ENCODE measurements at regions of chr11 and their contacts with region 1.

Region 1: GRCh38 chr11:34585735-34586487 is 35.0 kb upstream of the EHF start:
- DNase-seq: peak; percentile 64
- ATAC-seq: peak; percentile 72
- H3K4me3 ChIP-seq: peak overlapping the region in 1 of 2 experiments; percentile 25; a peak in 2 of 4 replicates
- H3K27ac ChIP-seq: peak overlapping the region; percentile 69
- H3K4me1 ChIP-seq: 0 out of 2 replicates have a peak, but pooled peaks cover 3% of the 10 kb centered on the region
- H3K27me3 ChIP-seq: no peaks in the 10 kb centered on the region; the same call in 1 of the 2 replicates
- CTCF ChIP-seq: peak; percentile 76

Region 2: DNA sequence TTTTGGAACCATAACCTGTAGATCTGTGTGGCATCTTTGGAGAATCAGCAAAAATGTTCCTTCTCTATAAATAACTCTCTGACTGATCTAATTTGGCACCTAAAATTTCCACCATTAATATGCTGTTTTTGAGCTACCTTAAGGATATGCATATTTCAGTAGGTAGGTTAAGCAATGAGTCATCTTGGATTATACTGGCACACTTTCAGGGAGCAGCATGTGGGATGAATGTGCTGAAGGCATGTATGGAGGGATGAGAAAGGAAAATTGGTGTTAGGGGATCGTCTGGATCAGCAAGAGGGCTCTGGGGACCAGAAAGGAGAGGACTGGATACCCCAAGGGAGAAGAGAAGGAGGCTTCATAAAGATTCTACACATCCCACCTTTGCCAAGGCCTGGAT is 27.7 kb before region 1 on chr11:
- CTCF ChIA-PET with region 1: no interaction called
- POLR2A ChIA-PET with region 1: no interaction called
- in situ Hi-C with region 1: no loop called
- intact Hi-C with region 1: no loop called
- DNase-seq: no peak
- ATAC-seq: no peak
- H3K4me3 ChIP-seq: no peak overlapping the region
- H3K27ac ChIP-seq: no peak overlapping the region
- H3K4me1 ChIP-seq: no peaks in the 10 kb centered on the region
- H3K27me3 ChIP-seq: peaks cover 28% of the 10 kb centered on the region
- CTCF ChIP-seq: no peak

Region 3: DNA sequence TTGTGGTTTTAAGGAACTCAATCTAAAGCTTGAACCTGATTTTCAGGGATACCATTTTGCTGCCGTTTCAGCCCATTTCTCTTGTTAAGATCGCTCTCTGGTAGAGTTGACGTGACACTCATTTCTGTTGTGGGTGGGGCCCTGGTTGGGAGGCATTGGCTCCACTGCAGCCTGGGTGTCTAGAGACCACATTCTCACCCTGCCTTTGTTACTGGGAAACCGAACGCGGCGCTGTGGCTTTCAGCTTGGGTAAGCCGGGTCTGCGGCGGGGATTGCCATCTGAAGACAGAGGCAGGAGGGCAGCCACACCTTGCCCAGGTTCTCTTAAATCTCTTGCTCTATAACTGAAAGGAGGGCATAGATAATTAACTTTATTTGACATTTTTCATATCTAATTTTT is 38.2 kb after region 1 on chr11:
- CTCF ChIA-PET with region 1: no interaction called
- POLR2A ChIA-PET with region 1: no interaction called
- in situ Hi-C with region 1: no loop called
- intact Hi-C with region 1: no loop called
- DNase-seq: no peak
- ATAC-seq: no peak
- H3K4me3 ChIP-seq: no peak overlapping the region
- H3K27ac ChIP-seq: no peak overlapping the region
- H3K4me1 ChIP-seq: no peaks in the 10 kb centered on the region; the same call in 1 of the 2 replicates
- H3K27me3 ChIP-seq: no peaks in the 10 kb centered on the region
- CTCF ChIP-seq: no peak

Region 4: DNA sequence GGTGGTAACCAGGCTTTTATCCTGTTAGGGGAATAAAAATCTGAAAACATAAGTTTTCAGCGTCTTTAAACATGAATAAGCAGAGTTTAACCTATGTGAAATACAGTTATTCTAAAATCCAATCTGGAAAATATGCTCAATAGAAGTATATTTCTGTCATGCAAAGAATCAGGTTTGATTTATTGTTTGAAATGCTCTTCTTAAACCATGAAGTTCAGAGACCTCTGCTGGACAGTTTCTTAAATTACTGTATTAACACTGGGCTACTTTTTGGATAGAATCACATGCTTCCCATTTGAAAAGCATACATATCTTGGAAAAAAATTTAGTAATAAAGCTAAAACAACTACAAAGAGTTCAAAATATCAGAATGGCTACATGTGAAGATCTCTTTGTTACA is 304.9 kb after region 1 on chr11:
- CTCF ChIA-PET with region 1: interaction called, 8 read pairs
- POLR2A ChIA-PET with region 1: no interaction called
- in situ Hi-C with region 1: no loop called
- intact Hi-C with region 1: loop called (anchors 2 kb)
- DNase-seq: no peak
- ATAC-seq: peak; percentile 63; the same call in 1 of the 2 replicates
- H3K4me3 ChIP-seq: no peak overlapping the region
- H3K27ac ChIP-seq: peak overlapping the region; percentile 30; the same call in 1 of the 2 replicates
- H3K4me1 ChIP-seq: no peaks in the 10 kb centered on the region; the same call in 1 of the 2 replicates
- H3K27me3 ChIP-seq: no peaks in the 10 kb centered on the region
- CTCF ChIP-seq: peak; percentile 43; the same call in 1 of the 2 replicates

Region 5: GRCh38 chr11:35391922-35392813 is 806.3 kb after region 1 on chr11:
- CTCF ChIA-PET with region 1: no interaction called
- POLR2A ChIA-PET with region 1: no interaction called
- in situ Hi-C with region 1: no loop called
- intact Hi-C with region 1: loop called (anchors 5 kb)
- DNase-seq: peak; percentile 61
- ATAC-seq: peak; percentile 91
- H3K4me3 ChIP-seq: no peak overlapping the region; a peak in 1 of 4 replicates
- H3K27ac ChIP-seq: peak overlapping the region; percentile 77
- H3K4me1 ChIP-seq: peaks cover 28% of the 10 kb centered on the region
- H3K27me3 ChIP-seq: no peaks in the 10 kb centered on the region
- CTCF ChIP-seq: peak; percentile 90